ENCODE measurements at regions of chr20 and their contacts with region 1.

Region 1: DNA sequence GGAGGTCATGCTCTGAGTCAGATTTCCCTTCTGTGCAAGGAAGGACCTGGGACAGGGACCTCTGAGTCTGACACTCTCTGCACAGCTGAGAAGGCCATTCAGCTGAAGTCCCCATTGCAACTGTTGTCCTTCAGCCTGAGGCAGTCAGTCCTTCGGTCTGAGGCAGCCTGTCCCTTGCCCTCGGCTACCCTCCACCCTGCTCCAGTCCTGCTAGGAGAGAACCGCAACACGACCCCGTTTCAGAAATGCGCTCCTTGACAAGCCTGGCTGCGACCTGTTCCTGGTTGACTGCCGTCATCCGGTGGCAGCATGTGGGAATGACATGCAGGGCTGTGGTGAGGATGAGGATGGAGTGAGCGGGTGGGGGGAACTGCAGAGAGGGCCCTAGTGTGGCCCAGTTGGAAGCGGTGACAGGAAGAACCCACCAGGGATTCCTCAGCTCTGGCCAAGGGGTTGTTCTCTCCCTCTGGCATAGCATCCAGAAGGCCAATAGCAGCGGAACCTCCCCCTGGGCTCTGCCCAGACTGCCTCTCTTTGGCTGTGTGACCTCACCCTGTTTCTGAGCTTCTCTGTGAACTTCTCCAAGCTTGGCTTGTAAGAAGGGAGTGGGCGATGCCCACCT is 40.3 kb upstream of the ANGPT4 start:
- DNase-seq: peak; percentile 78
- ATAC-seq: peak; percentile 77 to 87
- H3K4me3 ChIP-seq: no peak overlapping the region
- H3K27ac ChIP-seq: no peak overlapping the region
- H3K4me1 ChIP-seq: no peaks in the 10 kb centered on the region
- H3K27me3 ChIP-seq: peaks cover 21% of the 10 kb centered on the region
- CTCF ChIP-seq: peak; percentile 98

Region 2: GRCh38 chr20:815914-816606 is 140.4 kb before region 1 on chr20:
- intact Hi-C with region 1: loop called (anchors 5 kb)
- DNase-seq: peak; percentile 68
- ATAC-seq: peak; percentile 62 to 68
- H3K4me3 ChIP-seq: no peak overlapping the region
- H3K27ac ChIP-seq: no peak overlapping the region
- H3K4me1 ChIP-seq: no peaks in the 10 kb centered on the region
- H3K27me3 ChIP-seq: peaks cover under 1% of the 10 kb centered on the region
- CTCF ChIP-seq: peak; percentile 96

Region 3: DNA sequence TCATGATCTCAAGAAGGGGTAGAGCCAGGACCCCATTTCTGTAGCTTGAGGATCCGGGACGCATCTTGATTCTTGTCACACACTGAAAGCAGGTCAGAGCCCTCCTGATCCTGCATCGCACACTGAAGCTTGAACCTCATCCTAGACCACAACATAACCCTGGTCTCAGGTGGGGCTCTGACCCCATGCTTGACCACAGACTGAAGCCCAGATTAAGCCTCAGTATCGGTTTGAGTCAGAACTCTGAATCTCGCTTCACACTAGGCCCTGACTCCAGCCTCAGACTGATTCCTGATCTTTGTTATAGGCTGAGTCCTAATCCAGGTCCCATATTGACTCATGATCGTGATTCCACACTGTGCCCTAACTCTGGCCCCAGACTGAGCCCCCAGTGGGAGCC is 54.2 kb after region 1 on chr20:
- intact Hi-C with region 1: no loop called
- DNase-seq: no peak
- ATAC-seq: no peak
- H3K4me3 ChIP-seq: no peak overlapping the region
- H3K27ac ChIP-seq: no peak overlapping the region
- H3K4me1 ChIP-seq: no peaks in the 10 kb centered on the region
- H3K27me3 ChIP-seq: peaks cover 8% of the 10 kb centered on the region
- CTCF ChIP-seq: no peak

Measured in lower lobe of right lung (tissue), 2 donors.